ENCODE measurements at regions of chrX and their contacts with region 1.

Region 1: DNA sequence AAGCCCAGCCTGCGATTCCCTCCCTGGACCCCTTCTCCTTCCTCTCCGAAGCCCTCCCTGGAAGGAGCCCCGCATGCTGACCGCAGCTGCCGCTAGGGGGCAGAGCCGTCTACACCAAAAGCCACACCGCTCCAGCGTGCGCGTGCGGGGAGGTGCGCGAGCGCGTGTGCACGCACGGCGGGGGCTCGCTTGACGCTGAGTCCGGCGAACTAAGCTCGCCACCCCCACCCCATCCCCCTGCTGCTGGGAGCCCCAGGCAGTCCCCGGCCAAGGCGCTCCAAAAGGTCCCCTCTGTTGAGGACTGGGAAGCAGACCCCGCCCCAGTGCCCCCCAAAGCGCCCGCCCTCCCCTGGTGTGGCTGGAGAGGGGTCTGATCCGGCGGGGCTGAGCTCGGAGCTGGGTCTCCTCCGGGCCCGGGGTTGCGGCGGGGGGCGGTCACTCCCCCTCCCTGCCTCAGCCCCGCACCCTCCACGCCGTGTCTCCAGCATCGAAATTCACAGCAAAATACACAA is 11.0 kb upstream of the CCNQ start:
- DNase-seq: no peak
- H3K4me3 ChIP-seq: peak overlapping the region; percentile 47
- CTCF ChIP-seq: peak; percentile 86

Region 2: DNA sequence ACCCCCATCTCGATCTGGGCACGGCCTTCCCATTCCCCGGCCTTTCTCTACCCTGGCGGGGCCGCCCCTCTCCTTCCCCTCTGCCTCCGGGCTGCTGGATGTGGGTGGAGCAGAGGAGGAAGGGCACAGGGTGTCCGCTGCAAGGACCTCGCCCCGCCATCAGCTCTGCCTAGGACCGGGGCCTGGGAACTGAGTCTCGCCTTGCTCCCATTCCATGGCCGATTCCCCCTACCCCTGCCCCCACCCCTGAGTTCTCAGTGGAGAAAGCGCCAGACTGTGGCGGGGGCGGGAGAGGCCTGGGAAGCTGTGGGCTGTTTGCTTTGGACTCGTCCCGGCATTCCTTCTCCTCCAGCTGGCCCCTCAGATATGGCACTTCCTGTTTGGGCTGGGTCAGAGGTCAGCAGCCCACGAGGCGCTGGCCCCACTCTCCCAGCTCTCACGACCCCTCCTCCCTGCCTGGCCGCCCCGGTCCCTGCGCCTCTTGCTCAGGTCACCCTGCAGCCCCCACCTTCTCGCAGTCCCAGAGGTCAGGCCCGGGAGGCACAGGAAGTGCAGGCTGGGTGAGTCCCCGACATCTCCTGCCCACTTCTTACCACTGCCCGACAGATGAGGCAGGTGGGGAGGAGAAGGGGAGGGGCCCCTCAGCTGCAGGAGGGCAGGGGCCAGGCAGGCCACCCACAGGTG is 121.6 kb before region 1 on chrX:
- CTCF ChIA-PET with region 1: no interaction called
- POLR2A ChIA-PET with region 1: no interaction called
- DNase-seq: no peak
- H3K4me3 ChIP-seq: no peak overlapping the region
- CTCF ChIP-seq: no peak

Region 3: GRCh38 chrX:153599192-153600031 is 10.6 kb before region 1 on chrX:
- CTCF ChIA-PET with region 1: interaction called, 37 read pairs
- POLR2A ChIA-PET with region 1: no interaction called
- DNase-seq: peak; percentile 9
- H3K4me3 ChIP-seq: peak overlapping the region; percentile 66
- CTCF ChIP-seq: no peak

Region 4: DNA sequence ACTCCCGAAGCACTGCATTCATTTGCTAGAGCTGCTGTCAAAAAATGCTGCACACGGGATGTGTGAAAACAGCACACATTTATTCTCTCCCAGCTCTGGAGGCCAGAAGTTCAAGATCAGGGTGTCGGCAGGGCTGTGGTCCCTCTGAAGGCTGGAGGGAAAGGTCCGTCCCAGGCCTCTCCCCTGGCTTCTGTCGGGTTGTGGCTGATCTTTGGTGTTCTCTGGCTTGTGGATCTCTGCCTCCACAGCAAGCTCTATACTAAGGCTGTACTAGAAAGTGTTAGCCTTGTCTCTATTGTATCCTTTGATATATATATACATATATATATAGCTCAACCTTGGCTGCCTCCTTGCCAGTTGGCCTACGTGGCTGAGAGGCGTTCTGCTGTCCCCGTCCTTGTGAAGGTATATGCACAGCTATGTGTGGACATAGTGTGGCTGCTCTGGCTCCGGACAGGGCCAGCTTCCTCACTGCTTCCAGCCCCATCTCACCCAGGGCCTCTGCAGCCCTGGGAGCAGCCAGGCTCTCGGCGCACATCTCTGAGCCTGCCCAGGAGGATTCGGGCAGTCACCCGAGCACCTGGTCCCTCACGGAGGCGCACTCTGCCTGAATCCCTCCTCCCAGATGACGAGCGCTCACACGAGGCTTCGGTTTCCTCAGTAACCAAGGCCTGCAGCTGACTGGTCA is 22.1 kb after region 1 on chrX:
- CTCF ChIA-PET with region 1: interaction called, 13 read pairs
- POLR2A ChIA-PET with region 1: no interaction called
- DNase-seq: no peak
- H3K4me3 ChIP-seq: no peak overlapping the region
- CTCF ChIP-seq: no peak

Region 5: DNA sequence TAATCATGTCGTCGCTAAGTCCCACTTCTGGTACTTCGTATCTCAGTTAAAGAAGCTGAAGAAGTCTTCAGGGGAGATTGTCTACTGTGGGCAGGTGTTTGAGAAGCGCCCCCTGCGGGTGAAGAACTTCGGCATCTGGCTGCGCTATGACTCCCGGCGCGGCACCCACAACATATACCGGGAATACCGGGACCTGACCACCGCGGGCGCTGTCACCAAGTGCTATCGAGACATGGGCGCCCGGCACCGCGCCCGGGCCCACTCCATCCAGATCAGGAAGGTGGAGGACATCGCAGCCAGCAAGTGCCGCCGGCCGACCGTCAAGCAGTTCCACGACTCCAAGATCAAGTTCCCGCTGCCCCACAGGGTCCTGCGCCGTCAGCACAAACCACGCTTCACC is 52.3 kb after region 1 on chrX:
- CTCF ChIA-PET with region 1: interaction called, 58 read pairs
- POLR2A ChIA-PET with region 1: no interaction called
- DNase-seq: no peak
- H3K4me3 ChIP-seq: no peak overlapping the region
- CTCF ChIP-seq: no peak